Left cardiac atrium (tissue), 4 donors: ENCODE measurements at regions of chr16 and their contacts with region 1.

Region 1: GRCh38 chr16:56708525-56709442 is 21.1 kb upstream of the NUP93 start:
- DNase-seq: no peak
- ATAC-seq: peak in 1 of 2 donors; percentile 34

Region 2: GRCh38 chr16:56576585-56577293 is 132.0 kb before region 1 on chr16:
- intact Hi-C with region 1: loop called (anchors 5 to 10 kb)
- DNase-seq: peak; percentile 74
- ATAC-seq: peak; percentile 90 to 94

Region 3: DNA sequence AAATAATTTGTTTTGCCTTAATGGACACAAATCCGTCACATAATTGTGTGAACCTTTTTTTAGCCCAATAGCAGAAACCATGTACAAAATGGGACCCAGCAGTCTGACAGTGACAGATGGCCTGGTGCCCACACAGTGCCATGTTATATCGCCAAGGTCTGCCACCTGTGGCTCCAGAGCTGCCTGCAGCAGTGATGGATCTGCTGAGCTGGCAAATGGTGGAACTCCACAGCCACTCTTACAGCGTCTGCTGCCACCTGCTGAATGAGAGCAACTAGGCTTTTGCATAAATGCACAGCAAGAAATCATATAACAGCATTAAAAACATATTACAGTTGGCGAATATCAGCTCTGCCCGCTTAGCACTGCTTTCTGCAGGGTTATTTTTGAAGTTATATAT is 80.6 kb after region 1 on chr16:
- intact Hi-C with region 1: no loop called
- DNase-seq: peak; percentile 31
- ATAC-seq: peak in 1 of 2 donors; percentile 44